PC-3 (cell line): ENCODE measurements at regions of chr9 and their contacts with region 1.

Region 1: GRCh38 chr9:75088260-75088905 is at the start of gene OSTF1:
- DNase-seq: peak; percentile 91
- ATAC-seq: peak; percentile 90
- H3K4me3 ChIP-seq: peak within 1 kb of the TSS; percentile 91
- H3K27ac ChIP-seq: peak within 1 kb of the TSS; percentile 59
- H3K4me1 ChIP-seq: 0 out of 2 replicates have a peak, but pooled peaks cover 9% of the 10 kb centered on the region
- H3K27me3 ChIP-seq: no peaks in the 10 kb centered on the region
- CTCF ChIP-seq: no peak
- total RNA-seq, gene OSTF1: 25.8 and 26.5 TPM in 2 replicates

Region 2: DNA sequence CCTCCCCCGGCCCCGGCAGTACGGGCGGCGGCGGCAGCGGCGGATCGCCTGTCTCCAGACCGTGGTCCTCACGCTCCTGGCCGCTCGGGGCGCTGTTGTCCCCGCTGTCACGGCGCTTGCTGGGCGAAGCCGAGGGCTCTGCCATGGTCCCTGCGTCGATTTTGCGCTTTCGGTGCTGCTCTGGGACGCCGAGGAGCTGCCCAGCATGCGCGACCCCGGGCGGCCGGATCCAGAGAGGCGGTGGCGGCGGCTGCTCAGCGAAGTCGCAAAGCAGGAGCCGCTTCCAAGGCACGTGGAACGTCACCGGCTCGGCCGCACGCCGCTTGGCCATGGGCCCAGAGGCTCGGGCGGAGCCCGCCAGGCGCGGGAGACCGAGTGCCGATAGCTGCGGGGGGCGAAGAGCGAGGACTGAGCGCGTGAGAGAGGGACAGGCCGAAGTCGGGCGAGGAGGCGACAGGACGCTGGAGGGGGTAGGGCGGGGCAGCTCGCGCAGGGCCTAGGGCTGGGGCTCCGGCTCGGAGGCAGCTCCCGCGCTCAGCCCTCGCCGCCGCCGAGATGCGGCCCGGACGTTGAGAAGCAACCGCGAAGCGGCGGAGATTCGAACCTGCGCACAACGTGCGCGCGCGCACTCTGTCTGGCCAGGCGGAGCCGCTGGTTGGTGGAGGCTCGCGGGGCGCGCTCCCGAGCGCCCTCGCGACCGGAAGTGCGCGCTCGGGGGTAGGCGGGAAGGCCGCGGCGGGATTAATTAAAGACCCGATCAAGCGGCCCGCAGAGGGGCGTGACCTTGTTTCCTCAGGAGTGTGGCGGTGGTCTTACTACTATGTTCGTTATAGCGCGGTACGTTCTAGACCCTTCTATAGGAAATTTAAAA is 135.9 kb before region 1 on chr9 and contains the start of gene C9orf40:
- CTCF ChIA-PET with region 1: interaction called, 3 read pairs
- POLR2A ChIA-PET with region 1: no interaction called
- intact Hi-C with region 1: loop called (anchors 5 kb)
- DNase-seq: peak; percentile 73
- ATAC-seq: peak; percentile 94
- H3K4me3 ChIP-seq: peak within 1 kb of the TSS; percentile 80
- H3K27ac ChIP-seq: peak within 1 kb of the TSS; percentile 40; the same call in 1 of the 2 replicates
- H3K4me1 ChIP-seq: no peaks in the 10 kb centered on the region
- H3K27me3 ChIP-seq: no peaks in the 10 kb centered on the region
- CTCF ChIP-seq: peak; percentile 59
- total RNA-seq, gene C9orf40: 4.7 and 7.7 TPM in 2 replicates

Region 3: GRCh38 chr9:75064307-75065025 is 23.9 kb before region 1 on chr9:
- CTCF ChIA-PET with region 1: no interaction called
- POLR2A ChIA-PET with region 1: interaction called, 3 read pairs
- intact Hi-C with region 1: loop called (anchors 1 kb)
- DNase-seq: peak; percentile 2
- ATAC-seq: peak; percentile 38; the same call in 1 of the 2 replicates
- H3K4me3 ChIP-seq: no peak overlapping the region
- H3K27ac ChIP-seq: no peak overlapping the region
- H3K4me1 ChIP-seq: no peaks in the 10 kb centered on the region
- H3K27me3 ChIP-seq: no peaks in the 10 kb centered on the region
- CTCF ChIP-seq: no peak

Region 4: DNA sequence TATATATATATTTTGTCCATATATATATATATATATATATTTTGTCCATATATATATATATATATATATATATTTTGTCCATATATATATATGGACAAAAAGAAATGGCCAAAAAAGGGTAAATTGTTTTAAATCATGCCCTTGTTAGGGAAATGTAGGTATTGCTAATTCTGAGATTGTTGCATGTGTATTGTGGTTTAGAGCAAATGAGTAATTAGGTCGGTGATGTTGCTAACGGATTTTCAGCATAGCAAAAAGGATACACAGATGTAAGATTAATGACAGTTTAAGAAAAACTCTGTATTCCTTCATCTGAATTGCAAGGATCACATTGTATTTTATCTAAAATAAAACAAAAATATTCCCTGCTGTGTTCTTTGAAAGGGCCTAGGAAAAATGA is 40.2 kb after region 1 on chr9:
- CTCF ChIA-PET with region 1: no interaction called
- POLR2A ChIA-PET with region 1: no interaction called
- intact Hi-C with region 1: no loop called
- DNase-seq: no peak
- ATAC-seq: no peak
- H3K4me3 ChIP-seq: no peak overlapping the region
- H3K27ac ChIP-seq: no peak overlapping the region
- H3K4me1 ChIP-seq: no peaks in the 10 kb centered on the region
- H3K27me3 ChIP-seq: no peaks in the 10 kb centered on the region
- CTCF ChIP-seq: no peak

Region 5: DNA sequence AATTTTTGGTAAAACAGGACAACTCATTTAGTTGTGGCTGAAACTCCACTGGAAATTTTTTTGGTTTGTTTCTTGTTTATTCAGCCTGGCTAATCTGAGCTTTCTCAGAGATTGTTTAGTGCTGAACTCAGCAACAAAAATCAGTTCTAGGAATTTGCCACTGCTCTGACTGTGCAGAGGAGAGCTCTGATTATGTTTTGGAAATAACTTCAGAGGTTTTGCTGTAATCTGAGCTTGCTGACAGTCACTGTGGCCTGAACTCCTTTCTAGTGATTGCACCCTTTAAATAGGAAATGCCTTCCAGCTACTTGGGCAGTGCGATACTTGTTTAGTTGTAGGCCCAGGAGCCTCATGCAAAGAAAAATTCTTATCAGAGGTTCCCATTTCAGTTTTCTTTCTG is 60.2 kb after region 1 on chr9:
- CTCF ChIA-PET with region 1: no interaction called
- POLR2A ChIA-PET with region 1: no interaction called
- intact Hi-C with region 1: no loop called
- DNase-seq: peak; percentile 12
- ATAC-seq: no peak
- H3K4me3 ChIP-seq: no peak overlapping the region
- H3K27ac ChIP-seq: no peak overlapping the region
- H3K4me1 ChIP-seq: no peaks in the 10 kb centered on the region
- H3K27me3 ChIP-seq: no peaks in the 10 kb centered on the region
- CTCF ChIP-seq: no peak

Region 6: GRCh38 chr9:75185585-75186170 is 97.3 kb after region 1 on chr9:
- CTCF ChIA-PET with region 1: no interaction called
- POLR2A ChIA-PET with region 1: no interaction called
- intact Hi-C with region 1: loop called (anchors 2 kb)
- DNase-seq: peak; percentile 27
- ATAC-seq: peak; percentile 59
- H3K4me3 ChIP-seq: no peak overlapping the region
- H3K27ac ChIP-seq: no peak overlapping the region
- H3K4me1 ChIP-seq: peaks cover 4% of the 10 kb centered on the region
- H3K27me3 ChIP-seq: no peaks in the 10 kb centered on the region
- CTCF ChIP-seq: peak; percentile 68